ENCODE measurements at regions of chr3 and their contacts with region 1.

Region 1: DNA sequence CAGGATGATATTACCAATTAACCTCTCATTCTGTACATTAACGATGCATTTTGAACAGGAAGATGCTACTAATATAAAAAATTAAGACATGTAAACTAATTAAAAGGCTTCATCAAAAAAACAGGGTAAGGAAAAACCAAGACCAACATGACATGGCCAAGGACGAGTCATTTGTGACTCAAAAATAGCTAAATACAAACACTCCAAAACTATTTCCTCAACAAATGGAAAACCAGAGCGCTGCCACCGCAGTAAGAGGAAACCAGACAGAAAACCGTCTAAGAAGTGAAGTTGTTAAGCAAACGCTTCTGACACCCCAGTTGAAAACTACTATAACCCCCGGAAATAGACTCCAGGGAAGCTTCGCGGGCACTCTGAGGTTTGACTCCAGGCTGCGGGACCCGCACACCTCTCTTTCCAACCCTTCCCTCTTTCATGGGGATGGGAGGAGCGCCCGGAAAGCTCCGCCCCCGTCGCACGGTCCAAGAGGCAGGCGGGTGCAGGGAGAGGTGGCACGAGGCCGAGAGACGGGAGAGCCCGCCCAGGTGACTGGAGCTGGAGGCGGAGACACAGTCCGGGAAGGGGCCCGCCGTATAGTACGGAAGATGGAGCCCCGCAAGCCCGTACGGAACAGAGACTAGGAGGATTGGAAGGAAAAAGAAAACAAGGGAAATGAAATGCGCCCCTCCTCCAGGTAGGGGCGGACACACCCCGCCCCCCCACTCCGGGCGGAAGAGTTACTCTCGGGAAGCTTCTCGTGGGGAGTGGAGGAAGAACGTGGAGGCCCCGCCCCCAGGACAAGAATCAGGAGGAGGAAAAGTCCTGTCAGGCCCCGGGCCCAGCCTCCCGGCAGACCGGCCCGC is 708 bp downstream of the DCAF1 start:
- DNase-seq: peak; percentile 89
- H3K4me3 Mint-ChIP-seq: peak overlapping the region; percentile 100
- H3K27ac Mint-ChIP-seq: peak overlapping the region; percentile 97
- H3K4me1 Mint-ChIP-seq: peaks cover 28% of the 10 kb centered on the region
- H3K27me3 Mint-ChIP-seq: no peaks in the 10 kb centered on the region

Region 2: GRCh38 chr3:51511000-51511399 is 11.9 kb after region 1 on chr3:
- CTCF ChIA-PET with region 1: interaction called, 33 read pairs
- POLR2A ChIA-PET with region 1: no interaction called
- DNase-seq: no peak
- H3K4me3 Mint-ChIP-seq: no peak overlapping the region
- H3K27ac Mint-ChIP-seq: no peak overlapping the region
- H3K4me1 Mint-ChIP-seq: peaks cover 26% of the 10 kb centered on the region
- H3K27me3 Mint-ChIP-seq: no peaks in the 10 kb centered on the region

Measured in activated CD4-positive, alpha-beta T cell treated with anti-CD3 and anti-CD28 coated beads, Interleukin-2, amount 10 ng/mL, durations not matched to agents 7 days and 5 days (primary cell).